ENCODE measurements at regions of chr1 and their contacts with region 1.

Region 1: GRCh38 chr1:158506369-158506987 is 34.5 kb downstream of the OR10R2 start:
- DNase-seq: peak; percentile 44 to 87
- H3K4me3 ChIP-seq: no peak overlapping the region
- H3K27ac ChIP-seq: no peak overlapping the region
- H3K4me1 ChIP-seq: no peaks in the 10 kb centered on the region; a peak in 1 of 7 replicates
- H3K27me3 ChIP-seq: no peaks in the 10 kb centered on the region
- CTCF ChIP-seq: peak; percentile 50 to 84 (median 84)
- EP300 ChIP-seq: no peak
- POLR2A ChIP-seq: no peak
- RAD21 ChIP-seq: peak; percentile 93 to 95

Region 2: DNA sequence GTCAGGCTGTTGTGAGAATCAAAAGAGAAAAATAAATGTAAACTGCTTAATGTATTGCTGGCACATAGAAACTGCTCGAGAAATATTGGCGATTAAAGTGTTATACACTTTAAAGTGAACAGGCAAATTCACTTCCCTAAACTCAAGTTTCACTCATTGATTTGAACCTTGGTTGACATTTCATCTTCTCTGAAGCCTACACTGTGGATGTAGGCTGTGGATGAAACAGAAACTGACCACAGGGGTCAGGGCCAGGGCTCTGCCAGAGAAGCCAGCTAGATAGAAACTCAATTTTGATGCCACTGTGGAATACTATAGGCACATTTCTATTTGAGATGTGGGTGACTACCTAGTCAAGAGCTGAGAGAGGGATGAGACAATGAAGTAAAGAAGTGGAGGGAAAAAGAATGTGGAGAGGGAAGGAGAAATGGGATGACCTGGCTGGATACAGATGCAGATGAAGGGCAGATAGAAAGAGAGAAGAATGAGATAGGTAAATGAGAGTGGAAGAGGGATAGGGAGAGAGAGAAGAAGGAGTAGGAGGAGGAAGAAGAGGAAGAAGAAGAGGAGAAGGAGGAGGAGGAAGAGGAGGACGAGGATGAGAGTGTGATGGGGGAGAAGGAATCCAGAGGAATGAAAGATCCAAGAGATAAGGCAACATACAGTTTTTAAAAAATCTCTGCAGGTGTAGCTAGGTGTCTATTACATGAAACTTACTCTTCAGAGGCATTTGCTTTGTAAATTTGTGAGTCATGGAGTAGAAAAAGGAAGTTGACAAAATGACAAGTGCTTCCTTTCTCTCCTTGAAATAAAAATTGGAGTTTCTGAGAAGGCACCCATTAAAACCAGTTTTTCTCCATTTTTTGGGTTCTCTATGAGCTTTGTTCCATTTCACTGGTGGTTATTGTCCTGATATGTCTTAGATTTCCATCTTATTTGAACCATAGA is 343.2 kb before region 1 on chr1:
- CTCF ChIA-PET with region 1: no interaction called
- POLR2A ChIA-PET with region 1: no interaction called
- DNase-seq: no peak
- H3K4me3 ChIP-seq: no peak overlapping the region
- H3K27ac ChIP-seq: no peak overlapping the region
- H3K4me1 ChIP-seq: no peaks in the 10 kb centered on the region
- H3K27me3 ChIP-seq: no peaks in the 10 kb centered on the region; a peak in 1 of 7 replicates
- CTCF ChIP-seq: no peak
- EP300 ChIP-seq: no peak
- POLR2A ChIP-seq: no peak
- RAD21 ChIP-seq: no peak

Region 3: GRCh38 chr1:158998781-158999161 is 492.3 kb after region 1 on chr1:
- CTCF ChIA-PET with region 1: interaction called, 27 read pairs
- POLR2A ChIA-PET with region 1: no interaction called
- DNase-seq: no peak
- H3K4me3 ChIP-seq: peak overlapping the region; percentile 58 to 79 (median 72); a peak in 7 of 8 replicates
- H3K27ac ChIP-seq: no peak overlapping the region
- H3K4me1 ChIP-seq: peaks cover 0 to 9% (median 2%) of the 10 kb centered on the region in 4 experiments; a peak in 3 of 7 replicates
- H3K27me3 ChIP-seq: peaks cover 0 to under 1% (median 0%) of the 10 kb centered on the region in 4 experiments; a peak in 1 of 7 replicates
- CTCF ChIP-seq: peak in 2 of 3 experiments; percentile 62 to 72; a peak in 2 of 4 replicates
- EP300 ChIP-seq: no peak
- POLR2A ChIP-seq: no peak
- RAD21 ChIP-seq: peak; percentile 89 to 92

Measured in H1 (cell line).